Right lobe of liver (tissue), 6 donors: ENCODE measurements at regions of chr22 and their contacts with region 1.

Region 1: GRCh38 chr22:38868886-38869381 is 3.1 kb downstream of the CBX6 start:
- DNase-seq: peak; percentile 77 to 86 (median 83)
- ATAC-seq: peak; percentile 30 to 54 (median 51)
- H3K4me3 ChIP-seq: no peak overlapping the region
- H3K27ac ChIP-seq: no peak overlapping the region
- H3K4me1 ChIP-seq: peaks cover 0 to 21% (median 0%) of the 10 kb centered on the region in 4 donors
- H3K27me3 ChIP-seq: no peaks in the 10 kb centered on the region
- CTCF ChIP-seq: peak; percentile 68 to 96 (median 92)
- POLR2A ChIP-seq: no peak

Region 2: GRCh38 chr22:39003165-39003638 is 134.3 kb after region 1 on chr22:
- intact Hi-C with region 1: loop called in 1 of 2 experiments (anchors 5 kb)
- DNase-seq: peak; percentile 63 to 70 (median 64)
- ATAC-seq: peak; percentile 94 to 98 (median 96)
- H3K4me3 ChIP-seq: no peak overlapping the region
- H3K27ac ChIP-seq: no peak overlapping the region
- H3K4me1 ChIP-seq: no peaks in the 10 kb centered on the region
- H3K27me3 ChIP-seq: no peaks in the 10 kb centered on the region
- CTCF ChIP-seq: peak; percentile 58 to 72 (median 64)
- POLR2A ChIP-seq: no peak

Region 3: GRCh38 chr22:39123751-39124601 is 255.0 kb after region 1 on chr22:
- intact Hi-C with region 1: loop called in 1 of 2 experiments (anchors 10 kb)
- DNase-seq: peak in 1 of 3 donors; percentile 51
- ATAC-seq: peak; percentile 26 to 45 (median 37)
- H3K4me3 ChIP-seq: no peak overlapping the region
- H3K27ac ChIP-seq: no peak overlapping the region
- H3K4me1 ChIP-seq: no peaks in the 10 kb centered on the region
- H3K27me3 ChIP-seq: no peaks in the 10 kb centered on the region
- CTCF ChIP-seq: no peak
- POLR2A ChIP-seq: no peak

Region 4: GRCh38 chr22:39135090-39135896 is 266.4 kb after region 1 on chr22:
- intact Hi-C with region 1: loop called in 1 of 2 experiments (anchors 10 kb)
- DNase-seq: no peak
- ATAC-seq: peak; percentile 28 to 53 (median 48)
- H3K4me3 ChIP-seq: no peak overlapping the region
- H3K27ac ChIP-seq: no peak overlapping the region
- H3K4me1 ChIP-seq: no peaks in the 10 kb centered on the region
- H3K27me3 ChIP-seq: no peaks in the 10 kb centered on the region
- CTCF ChIP-seq: peak in 3 of 4 donors; percentile 25 to 31 (median 28)
- POLR2A ChIP-seq: no peak